ENCODE measurements at regions of chr4 and their contacts with region 1.

Region 1: GRCh38 chr4:122732329-122733026 is at the start of gene BBS12:
- DNase-seq: peak; percentile 99
- H3K4me3 Mint-ChIP-seq: peak within 1 kb of the TSS; percentile 84
- H3K27ac Mint-ChIP-seq: peak within 1 kb of the TSS; percentile 93
- H3K4me1 Mint-ChIP-seq: peaks cover 4% of the 10 kb centered on the region
- H3K27me3 Mint-ChIP-seq: no peaks in the 10 kb centered on the region
- CTCF ChIP-seq: peak; percentile 8
- total RNA-seq, gene BBS12: 4.7 and 8.3 TPM in 2 replicates

Region 2: DNA sequence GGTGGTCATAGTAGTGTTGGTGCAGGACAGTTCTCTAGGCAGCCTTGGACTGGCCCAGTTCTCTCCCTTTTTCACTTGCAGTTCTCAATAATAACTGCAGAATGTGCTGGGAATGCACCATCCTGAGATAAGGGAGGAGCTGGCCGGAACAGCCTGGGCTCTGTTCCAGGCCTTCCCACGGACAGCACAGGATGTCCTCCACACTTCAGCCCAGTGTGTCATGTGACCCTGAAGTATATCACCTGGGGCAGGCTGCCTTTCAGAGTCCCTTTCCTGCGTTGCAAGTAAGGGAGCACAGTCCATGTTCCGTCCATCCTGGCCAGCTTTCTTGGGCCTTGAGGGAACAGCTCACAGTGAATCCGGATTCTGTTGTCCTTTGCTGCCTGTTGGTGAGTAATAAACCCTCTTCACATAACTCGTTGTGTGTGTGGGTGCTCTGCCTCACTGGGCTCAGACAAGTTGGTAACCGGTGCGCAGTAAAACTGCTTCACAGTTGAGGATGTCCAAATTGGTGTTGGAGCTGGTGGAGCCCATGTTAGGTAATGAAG is 32.2 kb before region 1 on chr4:
- CTCF ChIA-PET with region 1: interaction called, 7 read pairs
- POLR2A ChIA-PET with region 1: interaction called, 23 read pairs
- intact Hi-C with region 1: no loop called
- DNase-seq: peak; percentile 86
- H3K4me3 Mint-ChIP-seq: peak overlapping the region; percentile 75
- H3K27ac Mint-ChIP-seq: peak overlapping the region; percentile 30
- H3K4me1 Mint-ChIP-seq: peaks cover 25% of the 10 kb centered on the region
- H3K27me3 Mint-ChIP-seq: no peaks in the 10 kb centered on the region
- CTCF ChIP-seq: no peak

Region 3: DNA sequence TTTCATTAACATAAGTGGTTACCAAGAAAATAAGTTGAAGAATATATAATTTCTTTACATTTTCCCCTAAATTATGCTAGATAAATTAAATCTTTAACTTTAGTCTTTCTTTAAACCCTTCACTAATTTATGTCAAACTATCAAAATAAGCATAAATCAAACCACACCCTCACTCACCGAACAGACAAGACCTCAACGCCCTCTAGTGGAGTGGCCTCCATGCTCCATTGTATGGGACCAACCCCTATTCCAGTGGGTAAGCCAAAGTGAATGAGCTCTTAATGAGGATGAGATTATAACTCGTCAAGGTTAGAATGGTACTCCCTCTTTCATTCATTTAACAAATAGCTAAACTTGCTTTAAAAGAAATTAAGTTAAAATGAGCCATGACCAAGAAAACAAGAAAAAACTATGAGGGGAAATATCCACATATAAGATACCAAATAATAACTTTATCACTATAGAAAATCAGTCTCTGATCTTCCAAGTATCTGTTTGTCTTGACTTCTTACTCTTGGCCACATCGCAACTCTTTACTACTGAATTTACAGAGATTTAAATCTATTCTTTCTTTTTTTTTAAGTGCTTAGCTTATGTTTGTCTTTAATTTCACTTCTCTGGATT is 15.5 kb before region 1 on chr4:
- CTCF ChIA-PET with region 1: interaction called, 26 read pairs
- POLR2A ChIA-PET with region 1: interaction called, 13 read pairs
- intact Hi-C with region 1: no loop called
- DNase-seq: peak; percentile 84
- H3K4me3 Mint-ChIP-seq: no peak overlapping the region
- H3K27ac Mint-ChIP-seq: no peak overlapping the region
- H3K4me1 Mint-ChIP-seq: peaks cover 6% of the 10 kb centered on the region
- H3K27me3 Mint-ChIP-seq: no peaks in the 10 kb centered on the region
- CTCF ChIP-seq: peak; percentile 75

Region 4: GRCh38 chr4:122744229-122744628 is 11.8 kb after region 1 on chr4:
- CTCF ChIA-PET with region 1: interaction called, 18 read pairs
- POLR2A ChIA-PET with region 1: interaction called, 12 read pairs
- intact Hi-C with region 1: no loop called
- DNase-seq: peak; percentile 76
- H3K4me3 Mint-ChIP-seq: no peak overlapping the region
- H3K27ac Mint-ChIP-seq: no peak overlapping the region
- H3K4me1 Mint-ChIP-seq: peaks cover 4% of the 10 kb centered on the region
- H3K27me3 Mint-ChIP-seq: no peaks in the 10 kb centered on the region
- CTCF ChIP-seq: no peak

Region 5: GRCh38 chr4:122764821-122765215 is 32.3 kb after region 1 on chr4:
- CTCF ChIA-PET with region 1: no interaction called
- POLR2A ChIA-PET with region 1: interaction called, 12 read pairs
- intact Hi-C with region 1: no loop called
- DNase-seq: peak; percentile 76
- H3K4me3 Mint-ChIP-seq: peak overlapping the region; percentile 51
- H3K27ac Mint-ChIP-seq: peak overlapping the region; percentile 92
- H3K4me1 Mint-ChIP-seq: peaks cover 17% of the 10 kb centered on the region
- H3K27me3 Mint-ChIP-seq: no peaks in the 10 kb centered on the region
- CTCF ChIP-seq: no peak

Region 6: GRCh38 chr4:122922877-122923511 is 190.5 kb after region 1 on chr4:
- CTCF ChIA-PET with region 1: interaction called, 29 read pairs
- POLR2A ChIA-PET with region 1: interaction called, 24 read pairs
- intact Hi-C with region 1: loop called (anchors 2 kb)
- DNase-seq: peak; percentile 86
- H3K4me3 Mint-ChIP-seq: no peak overlapping the region
- H3K27ac Mint-ChIP-seq: peak overlapping the region; percentile 74
- H3K4me1 Mint-ChIP-seq: peaks cover 5% of the 10 kb centered on the region
- H3K27me3 Mint-ChIP-seq: no peaks in the 10 kb centered on the region
- CTCF ChIP-seq: no peak

Region 7: DNA sequence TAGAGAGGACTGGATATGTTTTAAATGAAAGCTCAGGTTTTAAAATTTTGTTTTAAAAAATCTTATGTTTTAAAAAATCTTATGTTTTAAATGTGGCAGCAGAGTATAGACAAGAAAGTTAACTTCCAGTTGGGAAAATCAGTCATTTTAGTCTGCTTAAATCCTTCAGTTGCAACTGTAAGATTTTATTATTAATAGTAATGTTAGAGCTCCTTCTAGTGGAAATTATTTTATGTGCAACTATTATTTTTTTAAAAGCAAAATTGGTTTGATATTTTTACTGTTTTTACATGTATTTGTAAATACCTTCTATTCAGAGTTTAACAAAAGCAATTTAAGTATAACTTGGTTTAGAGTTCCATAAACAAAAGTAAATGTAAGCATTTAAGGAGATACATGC is 198.4 kb after region 1 on chr4:
- CTCF ChIA-PET with region 1: interaction called, 22 read pairs
- POLR2A ChIA-PET with region 1: interaction called, 29 read pairs
- intact Hi-C with region 1: no loop called
- DNase-seq: peak; percentile 13
- H3K4me3 Mint-ChIP-seq: no peak overlapping the region
- H3K27ac Mint-ChIP-seq: no peak overlapping the region
- H3K4me1 Mint-ChIP-seq: no peaks in the 10 kb centered on the region
- H3K27me3 Mint-ChIP-seq: no peaks in the 10 kb centered on the region
- CTCF ChIP-seq: peak; percentile 51